CD14-positive monocyte (primary cell): ENCODE measurements at regions of chr12 and their contacts with region 1.

Region 1: DNA sequence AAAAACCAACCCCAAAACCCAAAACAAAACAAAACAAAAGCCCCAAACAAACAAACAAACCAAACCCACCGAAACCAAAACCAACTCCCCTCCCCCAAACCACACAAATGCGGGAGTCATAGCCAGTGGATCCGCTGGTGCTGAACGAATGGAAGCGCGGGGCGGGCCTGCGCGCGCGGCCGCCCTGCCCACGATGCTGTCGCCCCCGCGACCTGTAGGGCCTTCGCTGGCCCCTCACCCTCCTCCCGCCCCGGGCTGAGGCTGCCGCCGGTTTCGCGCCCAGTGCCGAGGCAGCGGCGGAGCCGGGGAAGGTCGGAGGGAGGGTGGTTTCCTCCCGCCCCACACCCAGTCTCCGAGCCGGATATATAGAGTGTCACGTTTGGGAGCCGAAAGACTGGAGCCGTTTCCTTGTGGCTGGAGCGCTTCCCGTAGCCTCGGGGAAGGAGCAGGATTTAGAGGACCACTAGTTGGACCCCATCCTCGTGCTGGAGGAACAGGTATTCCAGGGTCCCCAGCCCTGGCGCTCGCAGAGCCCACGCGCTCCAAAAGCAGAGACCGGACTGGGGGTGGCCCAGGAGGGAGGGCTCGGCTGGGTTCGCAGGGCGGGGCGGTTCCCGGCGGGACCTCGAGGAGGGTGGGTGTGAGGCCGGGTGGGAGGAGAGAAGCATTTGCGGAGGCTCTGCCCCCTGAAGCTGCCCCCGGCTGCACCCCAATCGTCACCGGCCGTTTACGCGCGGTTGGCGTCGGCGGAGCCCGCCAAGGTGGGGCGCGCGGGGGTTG is at the start of gene FAR2:
- DNase-seq: peak; percentile 34 to 57 (median 55)
- H3K4me3 ChIP-seq: peak within 1 kb of the TSS; percentile 76 to 91 (median 87)
- H3K4me3 Mint-ChIP-seq: peak within 1 kb of the TSS; percentile 97 to 99
- H3K27ac ChIP-seq: peak within 1 kb of the TSS; percentile 68 to 96
- H3K27ac Mint-ChIP-seq: peak within 1 kb of the TSS; percentile 81 to 100 (median 96)
- H3K4me1 ChIP-seq: peaks cover 50 to 56% of the 10 kb centered on the region in 2 donors
- H3K4me1 Mint-ChIP-seq: peaks cover 48% of the 10 kb centered on the region
- H3K27me3 ChIP-seq: no peaks in the 10 kb centered on the region
- H3K27me3 Mint-ChIP-seq: peaks cover 2 to 4% (median 3%) of the 10 kb centered on the region in 3 donors
- CTCF ChIP-seq: no peak
- polyA plus RNA-seq, gene FAR2: 14.8 to 38.0 (median 35.8) TPM

Region 2: DNA sequence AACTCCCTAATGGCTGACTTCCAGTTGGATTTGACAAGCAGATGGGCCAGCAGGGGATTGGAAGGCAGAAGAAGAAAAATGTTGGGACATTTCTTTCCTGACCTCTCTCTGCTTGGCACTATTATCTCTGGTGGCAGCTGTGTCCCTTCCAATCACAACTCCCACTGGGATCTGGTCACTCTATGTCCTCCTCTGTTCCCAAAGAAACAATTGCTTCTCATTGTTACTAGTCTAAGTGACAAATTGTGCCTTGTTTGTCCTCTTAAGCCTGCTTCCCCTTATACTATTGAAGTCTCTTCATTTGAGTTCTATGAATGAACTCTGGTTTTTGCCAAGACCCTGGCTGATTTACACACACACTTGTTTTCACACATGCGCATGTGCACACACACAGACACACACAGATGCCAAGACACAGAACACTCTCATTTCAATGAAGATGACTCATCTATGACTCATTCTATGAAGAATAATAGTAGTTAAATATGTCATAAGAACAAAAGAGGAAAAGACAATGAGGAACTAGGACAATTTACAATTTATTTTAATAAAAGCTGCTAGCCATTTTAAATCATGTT is 83.0 kb before region 1 on chr12:
- intact Hi-C with region 1: loop called in 1 of 2 experiments (anchors 10 kb)
- DNase-seq: peak; percentile 77 to 92 (median 89)
- H3K4me3 ChIP-seq: peak overlapping the region in 1 of 3 experiments; percentile 3
- H3K4me3 Mint-ChIP-seq: peak overlapping the region in 1 of 2 donors; percentile 66
- H3K27ac ChIP-seq: peak overlapping the region in 1 of 2 donors; percentile 56
- H3K27ac Mint-ChIP-seq: peak overlapping the region; percentile 4 to 89 (median 81)
- H3K4me1 ChIP-seq: peaks cover 25 to 32% of the 10 kb centered on the region in 2 donors
- H3K4me1 Mint-ChIP-seq: peaks cover 35% of the 10 kb centered on the region
- H3K27me3 ChIP-seq: no peaks in the 10 kb centered on the region
- H3K27me3 Mint-ChIP-seq: no peaks in the 10 kb centered on the region
- CTCF ChIP-seq: no peak

Region 3: DNA sequence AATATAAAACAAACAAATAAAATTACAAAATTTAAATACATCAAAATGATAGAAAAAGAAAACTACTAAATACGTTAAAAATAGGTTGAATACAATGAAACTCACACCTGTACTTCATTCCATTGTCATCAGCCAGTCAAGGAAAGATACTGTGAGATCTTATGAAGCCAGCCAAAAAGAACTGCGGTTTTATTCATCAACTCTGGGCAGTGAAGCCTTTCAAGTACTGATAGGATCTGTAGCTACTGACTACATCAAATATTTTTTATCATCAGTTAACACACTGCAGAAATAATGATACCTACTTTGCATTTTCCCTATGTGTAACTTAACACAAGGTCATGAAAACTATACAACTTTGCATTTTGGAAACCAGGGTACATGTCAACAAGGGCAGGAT is 46.4 kb before region 1 on chr12:
- intact Hi-C with region 1: no loop called
- DNase-seq: no peak
- H3K4me3 ChIP-seq: peak overlapping the region in 1 of 3 experiments; percentile 65
- H3K4me3 Mint-ChIP-seq: peak overlapping the region in 1 of 2 donors; percentile 78
- H3K27ac ChIP-seq: peak overlapping the region in 1 of 2 donors; percentile 74
- H3K27ac Mint-ChIP-seq: peak overlapping the region in 5 of 7 donors; percentile 74 to 92 (median 82)
- H3K4me1 ChIP-seq: peaks cover 20 to 22% of the 10 kb centered on the region in 2 donors
- H3K4me1 Mint-ChIP-seq: peaks cover 24% of the 10 kb centered on the region
- H3K27me3 ChIP-seq: no peaks in the 10 kb centered on the region
- H3K27me3 Mint-ChIP-seq: peaks cover 1 to 2% (median 2%) of the 10 kb centered on the region in 3 donors
- CTCF ChIP-seq: no peak

Region 4: GRCh38 chr12:29113101-29113500 is 36.0 kb before region 1 on chr12:
- intact Hi-C with region 1: no loop called
- DNase-seq: no peak
- H3K4me3 ChIP-seq: no peak overlapping the region
- H3K4me3 Mint-ChIP-seq: no peak overlapping the region
- H3K27ac ChIP-seq: no peak overlapping the region
- H3K27ac Mint-ChIP-seq: no peak overlapping the region
- H3K4me1 ChIP-seq: no peaks in the 10 kb centered on the region
- H3K4me1 Mint-ChIP-seq: no peaks in the 10 kb centered on the region
- H3K27me3 ChIP-seq: peaks cover 0 to 7% of the 10 kb centered on the region in 2 donors
- H3K27me3 Mint-ChIP-seq: peaks cover 4 to 24% (median 6%) of the 10 kb centered on the region in 3 donors
- CTCF ChIP-seq: no peak

Region 5: DNA sequence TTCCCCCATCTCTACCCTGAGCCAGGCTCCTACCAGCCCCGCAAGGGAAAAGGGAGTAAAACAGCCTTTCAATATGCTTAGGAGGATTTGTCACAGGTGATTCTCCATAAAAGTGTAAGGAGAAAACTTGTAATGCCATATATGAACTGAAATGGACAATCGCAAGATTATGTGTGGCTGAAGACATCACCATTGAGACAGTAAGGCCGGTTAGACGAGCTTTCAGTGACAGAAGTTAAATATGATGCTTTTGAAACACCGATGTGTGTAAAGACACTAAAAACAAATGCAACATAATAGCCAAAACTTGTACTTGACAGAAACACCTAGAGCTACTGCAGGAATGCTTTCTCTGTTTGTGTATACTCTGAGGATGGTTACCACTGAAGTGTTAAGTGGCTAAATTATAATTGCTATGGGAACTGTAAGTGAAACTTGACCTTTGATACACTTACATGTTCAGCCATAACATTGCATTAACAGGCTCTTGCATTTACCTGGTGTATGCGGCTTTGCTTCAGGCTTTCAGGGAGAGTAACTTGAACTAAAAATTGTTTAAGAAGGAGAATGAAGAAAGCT is 42.3 kb after region 1 on chr12:
- intact Hi-C with region 1: no loop called
- DNase-seq: no peak
- H3K4me3 ChIP-seq: no peak overlapping the region
- H3K4me3 Mint-ChIP-seq: no peak overlapping the region
- H3K27ac ChIP-seq: no peak overlapping the region
- H3K27ac Mint-ChIP-seq: no peak overlapping the region
- H3K4me1 ChIP-seq: no peaks in the 10 kb centered on the region
- H3K4me1 Mint-ChIP-seq: peaks cover 1% of the 10 kb centered on the region
- H3K27me3 ChIP-seq: no peaks in the 10 kb centered on the region
- H3K27me3 Mint-ChIP-seq: peaks cover 0 to 3% (median 2%) of the 10 kb centered on the region in 3 donors
- CTCF ChIP-seq: no peak

Region 6: DNA sequence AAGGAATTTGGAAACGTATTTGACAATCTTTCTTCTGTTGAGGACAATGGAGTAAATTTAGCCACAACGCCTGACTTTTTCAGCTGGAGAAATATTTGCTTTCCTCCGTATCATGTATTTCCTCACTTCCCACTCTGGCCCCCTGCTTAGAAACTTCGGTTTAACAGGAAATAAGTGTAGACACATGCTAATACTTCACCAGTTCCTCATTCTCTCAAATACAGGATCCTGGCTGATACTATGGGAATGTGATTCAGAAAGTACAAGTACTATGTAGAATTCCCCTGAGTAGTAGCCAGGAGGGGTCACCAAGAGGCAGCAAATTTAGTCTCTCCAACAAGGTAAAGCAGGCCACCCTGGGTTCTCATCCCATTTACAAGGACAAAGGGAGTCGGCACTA is 58.0 kb after region 1 on chr12:
- intact Hi-C with region 1: loop called in 1 of 2 experiments (anchors 10 kb)
- DNase-seq: peak; percentile 66 to 94 (median 91)
- H3K4me3 ChIP-seq: peak overlapping the region; percentile 23 to 65 (median 37)
- H3K4me3 Mint-ChIP-seq: peak overlapping the region; percentile 68 to 89
- H3K27ac ChIP-seq: peak overlapping the region; percentile 75 to 78
- H3K27ac Mint-ChIP-seq: peak overlapping the region; percentile 87 to 98 (median 93)
- H3K4me1 ChIP-seq: peaks cover 46 to 53% of the 10 kb centered on the region in 2 donors
- H3K4me1 Mint-ChIP-seq: peaks cover 54% of the 10 kb centered on the region
- H3K27me3 ChIP-seq: no peaks in the 10 kb centered on the region
- H3K27me3 Mint-ChIP-seq: peaks cover 0 to 3% (median 0%) of the 10 kb centered on the region in 3 donors
- CTCF ChIP-seq: no peak

Region 7: DNA sequence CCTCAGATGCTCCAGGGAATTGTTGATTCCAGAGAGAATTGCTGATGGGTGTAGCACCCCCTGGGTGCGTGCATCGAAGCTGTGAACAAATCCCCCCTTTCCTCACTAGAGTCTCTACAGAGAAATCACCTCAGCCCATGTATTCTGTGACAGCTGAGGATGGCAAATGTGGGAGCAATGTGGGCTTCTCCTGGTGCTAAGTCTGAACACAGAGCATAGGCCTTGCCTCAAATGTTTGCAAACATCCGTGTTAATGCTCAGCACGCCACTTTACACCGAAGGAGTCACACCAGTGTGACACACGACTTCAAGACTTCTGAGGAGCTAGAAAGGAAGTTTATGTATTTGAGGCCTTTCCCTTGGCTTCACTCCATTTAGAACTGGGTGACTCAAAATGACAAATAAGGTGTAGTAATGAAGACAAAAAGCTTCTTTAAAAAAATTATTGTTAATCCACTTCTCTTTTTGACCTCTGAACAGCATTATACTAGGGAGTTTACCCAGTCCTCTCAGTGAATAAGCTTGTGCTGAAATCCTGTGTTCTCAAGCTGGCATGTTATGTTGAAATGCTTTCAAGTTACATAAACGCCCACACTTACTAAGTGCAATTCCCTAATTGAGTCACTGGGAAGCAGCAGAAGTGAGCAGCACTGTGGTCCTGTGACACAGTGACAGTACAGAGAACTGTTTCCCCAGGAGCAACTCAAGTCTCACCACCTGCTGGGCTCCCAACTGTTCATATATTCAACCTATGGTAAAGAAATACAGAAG is 92.9 kb after region 1 on chr12:
- intact Hi-C with region 1: loop called in 1 of 2 experiments (anchors 10 kb)
- DNase-seq: peak; percentile 93 to 99 (median 95)
- H3K4me3 ChIP-seq: peak overlapping the region in 1 of 3 experiments; percentile 19
- H3K4me3 Mint-ChIP-seq: peak overlapping the region; percentile 15 to 34
- H3K27ac ChIP-seq: peak overlapping the region; percentile 95 to 100
- H3K27ac Mint-ChIP-seq: peak overlapping the region; percentile 97 to 100 (median 99)
- H3K4me1 ChIP-seq: peaks cover 30 to 38% of the 10 kb centered on the region in 2 donors
- H3K4me1 Mint-ChIP-seq: peaks cover 39% of the 10 kb centered on the region
- H3K27me3 ChIP-seq: no peaks in the 10 kb centered on the region
- H3K27me3 Mint-ChIP-seq: peaks cover 0 to 1% (median 0%) of the 10 kb centered on the region in 3 donors
- CTCF ChIP-seq: peak; percentile 25

Region 8: GRCh38 chr12:29404000-29404399 is 254.9 kb after region 1 on chr12:
- intact Hi-C with region 1: no loop called
- DNase-seq: no peak
- H3K4me3 ChIP-seq: no peak overlapping the region
- H3K4me3 Mint-ChIP-seq: no peak overlapping the region
- H3K27ac ChIP-seq: no peak overlapping the region
- H3K27ac Mint-ChIP-seq: no peak overlapping the region
- H3K4me1 ChIP-seq: no peaks in the 10 kb centered on the region
- H3K4me1 Mint-ChIP-seq: no peaks in the 10 kb centered on the region
- H3K27me3 ChIP-seq: peaks cover 0 to 1% of the 10 kb centered on the region in 2 donors
- H3K27me3 Mint-ChIP-seq: peaks cover 7 to 9% (median 8%) of the 10 kb centered on the region in 3 donors
- CTCF ChIP-seq: no peak